ENCODE measurements at regions of chr4 and their contacts with region 1.

Region 1: DNA sequence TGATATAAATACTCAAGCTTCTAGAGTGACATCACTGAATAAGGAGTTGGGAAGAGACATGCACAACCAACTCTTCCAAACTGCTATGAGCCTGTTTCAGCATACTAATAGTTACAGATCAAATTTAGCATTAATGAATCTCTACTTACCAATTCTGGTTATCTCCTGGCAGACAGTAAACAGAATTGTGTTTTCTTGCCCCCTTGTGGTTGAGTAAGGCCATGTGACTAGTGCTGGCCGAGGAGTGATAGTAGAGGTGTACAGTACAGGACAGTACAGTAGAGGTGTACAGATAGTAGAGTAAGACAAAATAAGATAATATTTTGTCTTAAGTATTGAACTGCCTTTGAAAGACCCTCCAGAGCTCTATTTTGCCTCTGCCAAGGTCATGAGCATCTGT is 681.4 kb downstream of the GABRG1 start:
- DNase-seq: peak; percentile 21
- H3K4me3 ChIP-seq: no peak overlapping the region
- H3K27ac ChIP-seq: no peak overlapping the region
- H3K4me1 ChIP-seq: no peaks in the 10 kb centered on the region
- H3K27me3 ChIP-seq: no peaks in the 10 kb centered on the region
- CTCF ChIP-seq: peak; percentile 42
- EP300 ChIP-seq: no peak
- RAD21 ChIP-seq: peak; percentile 71

Region 2: GRCh38 chr4:44927399-44928380 is 514.8 kb before region 1 on chr4:
- CTCF ChIA-PET with region 1: interaction called, 15 read pairs
- POLR2A ChIA-PET with region 1: no interaction called
- DNase-seq: peak; percentile 0
- H3K4me3 ChIP-seq: no peak overlapping the region
- H3K27ac ChIP-seq: no peak overlapping the region
- H3K4me1 ChIP-seq: no peaks in the 10 kb centered on the region
- H3K27me3 ChIP-seq: no peaks in the 10 kb centered on the region
- CTCF ChIP-seq: peak; percentile 59
- EP300 ChIP-seq: no peak
- RAD21 ChIP-seq: peak; percentile 78

Region 3: DNA sequence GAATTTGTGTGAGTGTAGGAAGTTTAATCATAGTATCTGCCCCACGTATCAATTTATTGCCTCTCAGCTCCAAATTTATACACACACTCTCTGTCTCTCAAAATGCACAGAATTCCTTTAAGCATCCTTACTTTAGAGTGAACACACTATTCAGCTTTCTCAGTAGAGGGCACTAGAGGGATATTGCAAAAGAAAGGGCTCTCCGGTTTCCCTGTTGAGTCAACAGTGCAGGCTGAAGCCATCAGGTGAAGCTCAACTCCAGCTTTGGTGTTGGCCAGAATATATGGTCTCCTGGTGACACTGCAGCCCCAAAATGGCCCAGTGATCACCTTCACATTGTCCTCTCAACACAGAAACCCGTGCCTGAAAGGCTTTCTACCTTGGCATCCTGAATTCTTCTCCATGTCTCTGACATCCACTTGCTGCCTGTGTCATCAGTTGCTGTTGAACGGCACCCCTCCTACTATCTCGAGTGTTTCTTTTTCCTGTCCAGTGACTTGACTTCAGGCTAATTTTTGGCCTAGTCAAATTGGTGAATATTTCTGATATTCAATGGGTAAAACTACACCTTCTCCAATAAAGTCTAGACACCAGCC is 10.9 kb after region 1 on chr4:
- CTCF ChIA-PET with region 1: interaction called, 18 read pairs
- POLR2A ChIA-PET with region 1: no interaction called
- DNase-seq: peak; percentile 46
- H3K4me3 ChIP-seq: peak overlapping the region in 1 of 2 experiments; percentile 33; a peak in 1 of 4 replicates
- H3K27ac ChIP-seq: no peak overlapping the region
- H3K4me1 ChIP-seq: no peaks in the 10 kb centered on the region
- H3K27me3 ChIP-seq: no peaks in the 10 kb centered on the region
- CTCF ChIP-seq: peak; percentile 44
- EP300 ChIP-seq: no peak
- RAD21 ChIP-seq: peak; percentile 67

Region 4: GRCh38 chr4:45484740-45485139 is 42.3 kb after region 1 on chr4:
- CTCF ChIA-PET with region 1: no interaction called
- POLR2A ChIA-PET with region 1: no interaction called
- DNase-seq: no peak
- H3K4me3 ChIP-seq: no peak overlapping the region
- H3K27ac ChIP-seq: no peak overlapping the region
- H3K4me1 ChIP-seq: no peaks in the 10 kb centered on the region
- H3K27me3 ChIP-seq: no peaks in the 10 kb centered on the region
- CTCF ChIP-seq: no peak
- EP300 ChIP-seq: no peak
- RAD21 ChIP-seq: no peak

Measured in SK-N-SH (cell line).